ENCODE measurements at regions of chr10 and their contacts with region 1.

Region 1: DNA sequence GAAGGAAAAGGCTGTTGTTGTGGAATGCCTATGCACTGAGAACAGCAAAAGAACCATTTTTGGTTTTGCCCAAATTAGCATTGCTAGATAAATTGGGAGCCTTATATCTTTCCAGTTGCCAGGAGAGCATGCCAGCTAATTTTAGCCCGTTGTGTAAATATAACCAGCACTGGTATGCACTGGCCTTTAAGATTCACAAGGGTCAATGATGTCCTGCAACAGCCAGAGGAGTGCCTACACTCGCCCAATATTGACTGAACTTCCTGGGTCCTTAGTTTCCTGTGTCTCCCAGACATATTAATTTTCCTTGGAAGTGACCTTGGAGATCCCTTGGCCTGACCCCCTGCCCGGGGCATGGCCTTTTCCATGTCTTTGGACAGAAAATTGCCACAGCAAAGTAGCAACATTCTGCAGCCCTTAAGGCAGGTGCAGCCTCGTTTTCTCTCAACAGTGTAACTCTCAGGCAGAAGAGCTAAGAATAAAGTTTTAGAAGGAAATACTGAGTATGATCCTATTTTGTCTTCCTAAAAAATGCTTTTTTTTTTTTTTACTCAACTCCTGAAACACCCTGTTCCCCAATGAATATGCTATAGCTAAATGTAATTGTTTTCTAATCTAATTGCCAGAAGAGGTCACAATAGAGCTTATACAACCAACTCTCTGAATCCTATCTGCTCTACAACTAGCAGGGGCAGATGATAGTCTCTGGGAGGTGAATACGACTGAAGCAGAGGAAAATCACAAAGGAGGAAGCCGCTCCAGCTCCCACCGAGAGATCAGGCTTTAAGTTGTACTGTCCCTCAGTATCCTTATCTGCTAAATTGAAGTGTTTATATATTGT is 131.9 kb upstream of the PCGF5 start:
- DNase-seq: peak; percentile 27
- H3K4me3 Mint-ChIP-seq: no peak overlapping the region
- H3K27ac Mint-ChIP-seq: no peak overlapping the region
- H3K4me1 Mint-ChIP-seq: peaks cover 5% of the 10 kb centered on the region
- H3K27me3 Mint-ChIP-seq: no peaks in the 10 kb centered on the region
- CTCF ChIP-seq: peak; percentile 28

Region 2: GRCh38 chr10:90997670-90998069 is 90.8 kb before region 1 on chr10:
- CTCF ChIA-PET with region 1: no interaction called
- POLR2A ChIA-PET with region 1: no interaction called
- intact Hi-C with region 1: no loop called
- DNase-seq: no peak
- H3K4me3 Mint-ChIP-seq: no peak overlapping the region
- H3K27ac Mint-ChIP-seq: no peak overlapping the region
- H3K4me1 Mint-ChIP-seq: no peaks in the 10 kb centered on the region
- H3K27me3 Mint-ChIP-seq: no peaks in the 10 kb centered on the region
- CTCF ChIP-seq: no peak

Region 3: GRCh38 chr10:91077549-91078071 is 10.9 kb before region 1 on chr10:
- CTCF ChIA-PET with region 1: interaction called, 41 read pairs
- POLR2A ChIA-PET with region 1: no interaction called
- intact Hi-C with region 1: no loop called
- DNase-seq: peak; percentile 46
- H3K4me3 Mint-ChIP-seq: no peak overlapping the region
- H3K27ac Mint-ChIP-seq: no peak overlapping the region
- H3K4me1 Mint-ChIP-seq: peaks cover 6% of the 10 kb centered on the region
- H3K27me3 Mint-ChIP-seq: peaks cover 83% of the 10 kb centered on the region
- CTCF ChIP-seq: no peak

Measured in MCF 10A (cell line).